ENCODE measurements at regions of chr14 and their contacts with region 1.

Region 1: GRCh38 chr14:83664389-83664788 is 1865.6 kb upstream of the FLRT2 start:
- DNase-seq: no peak

Region 2: DNA sequence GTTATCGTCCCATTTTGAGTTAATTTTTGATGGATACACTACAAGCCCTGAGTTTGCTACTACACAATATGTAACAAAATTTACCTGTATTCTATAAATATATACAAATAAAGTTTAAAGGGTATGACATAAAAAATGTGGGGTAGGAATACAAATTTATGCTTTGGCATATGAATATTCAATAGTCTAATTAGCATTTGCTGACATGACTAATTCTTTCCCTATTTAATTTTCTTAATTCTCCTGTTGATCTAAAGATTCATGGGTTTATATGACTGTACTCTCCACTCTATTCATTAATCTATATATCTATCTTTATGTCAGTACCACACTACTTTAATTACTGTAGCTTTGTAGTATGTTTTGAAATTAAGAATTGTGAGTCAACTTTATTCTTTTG is 24.9 kb after region 1 on chr14:
- intact Hi-C with region 1: no loop called
- DNase-seq: no peak

Region 3: GRCh38 chr14:83706231-83706954 is 42.0 kb after region 1 on chr14:
- intact Hi-C with region 1: no loop called
- DNase-seq: no peak

Region 4: GRCh38 chr14:83958363-83958762 is 294.0 kb after region 1 on chr14:
- intact Hi-C with region 1: loop called in 1 of 2 experiments (anchors 5 kb)
- DNase-seq: no peak